Dorsolateral prefrontal cortex (tissue), 120 donors: ENCODE measurements at regions of chr13 and their contacts with region 1.

Region 1: DNA sequence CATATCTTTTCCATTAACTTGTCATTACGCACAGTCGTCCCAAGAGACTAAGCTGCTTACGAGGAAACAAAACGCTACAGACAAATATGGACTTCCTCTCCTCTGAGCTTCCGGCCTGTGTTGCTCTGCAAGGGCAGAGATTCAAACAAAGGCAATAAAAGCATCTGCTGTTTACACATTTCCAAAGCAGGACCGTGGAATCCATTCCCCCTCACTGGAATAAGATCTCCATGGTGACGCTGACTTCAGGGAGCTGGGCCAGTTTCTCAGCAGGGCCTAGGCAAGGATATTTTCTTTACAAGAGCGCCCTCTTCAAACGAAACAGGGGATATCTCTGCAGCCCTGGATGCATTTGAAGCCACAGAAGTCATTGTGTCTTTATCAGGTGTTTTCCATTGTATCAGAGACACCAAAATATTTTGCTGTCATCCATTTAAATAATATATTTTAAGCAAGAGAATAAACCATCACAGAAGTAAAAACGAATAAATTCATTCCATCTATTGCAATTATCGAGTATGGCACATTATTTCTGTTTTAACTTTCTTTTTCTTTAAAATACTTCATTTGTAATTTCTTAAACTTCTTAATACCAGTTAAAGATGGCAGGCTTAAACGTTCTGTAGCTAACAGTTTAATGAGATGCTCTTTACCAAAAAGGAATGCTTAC is 177.5 kb downstream of the DCLK1 start:
- DNase-seq: peak; percentile 50 to 90 (median 84)
- H3K4me3 ChIP-seq: peak overlapping the region in 53 of 59 donors; percentile 4 to 61 (median 38)
- H3K27ac ChIP-seq: peak overlapping the region in 58 of 59 donors; percentile 1 to 87 (median 75)
- H3K27me3 ChIP-seq: no peaks in the 10 kb centered on the region
- CTCF ChIP-seq: peak; percentile 47 to 95 (median 82)

Region 2: GRCh38 chr13:35630551-35631275 is 323.0 kb before region 1 on chr13:
- intact Hi-C with region 1: loop called (anchors 10 kb)
- DNase-seq: peak in 1 of 10 donors; percentile 12
- H3K4me3 ChIP-seq: no peak overlapping the region
- H3K27ac ChIP-seq: no peak overlapping the region
- H3K27me3 ChIP-seq: no peaks in the 10 kb centered on the region
- CTCF ChIP-seq: peak; percentile 24 to 75 (median 61)

Region 3: GRCh38 chr13:35720690-35721554 is 232.8 kb before region 1 on chr13:
- intact Hi-C with region 1: loop called (anchors 2 to 5 kb)
- DNase-seq: peak in 9 of 10 donors; percentile 48 to 78 (median 59)
- H3K4me3 ChIP-seq: peak overlapping the region in 57 of 59 donors; percentile 6 to 65 (median 43)
- H3K27ac ChIP-seq: no peak overlapping the region
- H3K27me3 ChIP-seq: no peaks in the 10 kb centered on the region
- CTCF ChIP-seq: peak; percentile 65 to 99 (median 95)

Region 4: DNA sequence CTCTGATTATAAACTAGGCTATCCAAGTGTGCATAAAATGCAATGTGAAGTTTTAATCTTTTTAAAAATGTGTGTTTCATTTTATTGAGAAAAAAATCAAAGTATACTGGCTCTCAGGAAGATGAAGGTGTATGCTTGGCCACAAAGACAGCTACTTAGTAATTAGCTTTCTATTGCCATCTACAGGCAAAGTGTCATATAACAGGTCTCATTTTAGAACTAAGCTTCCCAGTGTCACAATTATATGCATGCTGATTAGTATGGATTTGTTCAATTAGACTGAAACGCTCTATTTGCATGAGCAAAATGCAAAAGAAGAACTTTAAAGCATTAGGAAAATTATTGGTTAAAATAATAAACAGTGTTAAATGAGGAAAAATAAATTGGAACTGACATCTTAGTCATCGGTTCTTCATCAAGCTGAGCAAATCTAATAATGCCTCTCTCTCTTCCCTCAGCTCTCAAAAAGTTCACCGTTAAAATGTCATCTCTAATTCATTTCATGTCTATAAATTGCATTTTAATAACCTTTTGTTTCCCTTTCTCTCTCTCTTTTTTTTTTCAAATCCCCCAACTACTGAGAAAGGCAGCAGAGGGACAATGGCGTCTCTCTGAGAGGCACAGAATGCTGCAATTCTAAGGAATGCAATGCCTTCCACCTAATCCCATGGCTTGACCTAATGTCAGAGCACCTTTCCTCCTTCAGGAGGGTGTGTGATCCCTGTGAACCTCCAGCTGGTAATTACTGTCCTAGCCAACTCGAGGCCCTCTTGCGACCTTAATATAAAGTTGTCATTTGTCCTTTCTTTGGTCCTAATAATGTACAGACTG is 164.1 kb before region 1 on chr13:
- intact Hi-C with region 1: loop called in 1 of 2 experiments (anchors 10 kb)
- DNase-seq: no peak
- H3K4me3 ChIP-seq: no peak overlapping the region
- H3K27ac ChIP-seq: peak overlapping the region in 1 of 59 donors; percentile 45
- H3K27me3 ChIP-seq: no peaks in the 10 kb centered on the region
- CTCF ChIP-seq: peak; percentile 30 to 77 (median 60)

Region 5: DNA sequence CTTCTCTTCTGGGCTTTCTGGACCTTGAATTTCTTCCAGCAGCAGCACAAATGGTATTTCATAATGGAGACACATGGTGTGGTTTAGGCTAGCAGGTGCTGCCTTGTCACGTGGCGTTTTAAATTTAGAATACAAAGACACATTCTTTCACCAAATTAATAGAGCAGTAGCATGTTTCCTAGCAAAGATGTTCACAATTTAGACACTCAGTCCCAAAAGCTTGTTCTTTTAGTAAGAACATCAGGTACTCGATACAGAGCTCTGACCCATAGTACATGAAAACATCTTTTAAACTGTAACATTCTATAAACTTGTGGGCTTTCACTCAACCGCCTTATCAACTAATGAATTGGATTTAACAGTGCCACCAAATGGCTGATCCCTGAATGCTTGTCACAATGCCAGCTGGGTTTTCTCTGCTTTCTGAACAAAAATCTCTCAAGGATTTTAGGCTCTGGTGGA is 112.6 kb before region 1 on chr13:
- intact Hi-C with region 1: loop called (anchors 5 kb)
- DNase-seq: peak in 4 of 10 donors; percentile 25 to 76 (median 69)
- H3K4me3 ChIP-seq: peak overlapping the region in 11 of 59 donors; percentile 2 to 35 (median 20)
- H3K27ac ChIP-seq: peak overlapping the region; percentile 35 to 97 (median 88)
- H3K27me3 ChIP-seq: no peaks in the 10 kb centered on the region
- CTCF ChIP-seq: peak in 42 of 56 donors; percentile 15 to 65 (median 34)

Region 6: GRCh38 chr13:35881360-35881759 is 72.3 kb before region 1 on chr13:
- intact Hi-C with region 1: loop called (anchors 5 to 10 kb)
- DNase-seq: peak in 9 of 10 donors; percentile 49 to 87 (median 72)
- H3K4me3 ChIP-seq: no peak overlapping the region
- H3K27ac ChIP-seq: peak overlapping the region in 58 of 59 donors; percentile 39 to 91 (median 79)
- H3K27me3 ChIP-seq: no peaks in the 10 kb centered on the region
- CTCF ChIP-seq: peak in 4 of 56 donors; percentile 1 to 24 (median 18)